ENCODE measurements at regions of chr22 and their contacts with region 1.

Region 1: GRCh38 chr22:36194971-36195370 is 6.6 kb downstream of the APOL4 start:
- DNase-seq: peak; percentile 60 to 76 (median 75)
- H3K4me3 ChIP-seq: no peak overlapping the region
- H3K27ac ChIP-seq: no peak overlapping the region
- H3K4me1 ChIP-seq: peaks cover 4 to 40% (median 20%) of the 10 kb centered on the region in 4 experiments
- H3K27me3 ChIP-seq: no peaks in the 10 kb centered on the region

Region 2: DNA sequence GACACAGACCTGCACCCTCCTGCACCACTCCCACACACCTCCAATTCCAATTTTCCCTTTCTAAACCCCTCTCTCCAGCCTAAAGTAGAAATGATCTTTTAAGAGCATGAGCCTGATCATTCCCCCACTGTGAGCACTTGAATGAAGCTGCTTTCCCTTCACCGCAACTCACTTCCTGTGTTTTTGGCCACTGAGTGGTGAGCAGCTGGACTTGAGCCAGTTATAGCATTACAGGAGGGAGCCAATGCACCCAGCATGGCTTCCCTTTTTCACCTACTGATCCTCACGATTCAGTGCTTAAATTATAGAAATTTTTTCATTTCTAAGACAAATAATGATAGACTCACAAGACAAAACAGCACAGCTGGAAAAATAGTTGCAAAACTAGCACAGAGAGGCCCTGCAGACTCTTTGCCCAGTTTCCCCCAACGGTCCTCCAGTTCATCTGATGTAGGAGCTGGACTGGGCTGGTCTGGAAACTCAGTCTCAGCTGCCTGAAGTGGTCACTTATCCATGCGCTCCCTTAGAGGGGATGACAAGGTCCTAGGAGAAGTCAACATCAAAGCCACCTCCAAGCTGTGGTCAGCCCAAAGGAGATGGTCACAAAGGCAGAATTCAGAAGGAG is 16.4 kb after region 1 on chr22:
- CTCF ChIA-PET with region 1: interaction called, 26 read pairs
- POLR2A ChIA-PET with region 1: no interaction called
- DNase-seq: peak; percentile 56 to 84 (median 81)
- H3K4me3 ChIP-seq: peak overlapping the region in 4 of 7 experiments; percentile 6 to 47 (median 35)
- H3K27ac ChIP-seq: no peak overlapping the region
- H3K4me1 ChIP-seq: peaks cover 6 to 52% (median 29%) of the 10 kb centered on the region in 4 experiments
- H3K27me3 ChIP-seq: no peaks in the 10 kb centered on the region

Region 3: DNA sequence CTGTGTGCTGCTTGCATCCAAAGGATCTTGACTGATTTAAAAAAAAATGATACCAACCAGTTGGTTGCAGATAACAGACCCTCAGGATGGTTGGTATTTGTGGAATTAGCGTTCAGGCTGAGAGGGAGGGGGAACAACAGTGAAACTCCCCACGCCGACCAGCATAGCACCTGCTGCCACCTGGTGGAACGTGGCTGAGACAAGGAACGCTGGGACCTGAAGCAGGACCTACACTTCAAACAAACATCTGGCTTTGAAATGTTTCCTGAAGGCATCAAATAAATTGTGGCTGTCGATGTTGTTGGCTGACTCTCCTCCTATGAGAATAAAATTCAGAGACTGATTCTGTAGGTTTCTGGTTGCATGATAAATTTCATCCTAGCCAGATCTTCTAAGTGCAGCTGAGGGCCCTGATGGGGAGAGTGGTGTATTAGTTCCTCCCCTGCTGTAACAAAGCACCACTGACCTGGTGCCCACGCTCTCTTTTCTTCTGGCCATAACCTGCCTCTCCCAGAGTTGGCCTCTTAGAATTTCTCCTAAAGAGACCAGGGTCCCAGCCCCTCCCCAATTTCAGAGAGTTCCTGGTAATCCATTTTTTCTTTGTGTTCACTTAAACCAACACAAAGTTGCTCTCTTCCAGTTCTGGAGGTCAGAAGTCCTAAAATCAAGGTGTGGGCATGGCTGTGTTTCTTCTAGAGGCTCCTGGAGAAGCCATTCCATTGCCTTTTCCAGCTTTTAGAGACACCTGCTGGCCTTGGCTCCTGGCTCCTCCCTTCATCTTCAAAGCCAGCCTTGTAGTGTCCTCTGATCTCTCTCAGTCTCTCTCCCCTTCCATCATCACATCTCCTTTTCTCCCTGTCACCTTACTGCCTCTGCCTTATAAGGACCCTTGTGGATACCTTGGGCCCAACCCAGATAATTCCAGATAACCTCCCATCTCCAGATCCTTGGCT is 27.1 kb after region 1 on chr22:
- CTCF ChIA-PET with region 1: interaction called, 26 read pairs
- POLR2A ChIA-PET with region 1: no interaction called
- DNase-seq: peak; percentile 52 to 59 (median 52)
- H3K4me3 ChIP-seq: peak overlapping the region in 1 of 7 experiments; percentile 61
- H3K27ac ChIP-seq: no peak overlapping the region
- H3K4me1 ChIP-seq: no peaks in the 10 kb centered on the region
- H3K27me3 ChIP-seq: no peaks in the 10 kb centered on the region

Region 4: GRCh38 chr22:36277482-36278291 is 82.7 kb after region 1 on chr22:
- CTCF ChIA-PET with region 1: interaction called, 11 read pairs
- POLR2A ChIA-PET with region 1: no interaction called
- DNase-seq: peak; percentile 62 to 81 (median 75)
- H3K4me3 ChIP-seq: peak overlapping the region in 1 of 7 experiments; percentile 8
- H3K27ac ChIP-seq: no peak overlapping the region
- H3K4me1 ChIP-seq: peaks cover 0 to 11% (median 6%) of the 10 kb centered on the region in 4 experiments
- H3K27me3 ChIP-seq: no peaks in the 10 kb centered on the region

Region 5: GRCh38 chr22:36286471-36287224 is 91.7 kb after region 1 on chr22:
- CTCF ChIA-PET with region 1: interaction called, 26 read pairs
- POLR2A ChIA-PET with region 1: no interaction called
- DNase-seq: peak; percentile 50 to 79 (median 69)
- H3K4me3 ChIP-seq: no peak overlapping the region
- H3K27ac ChIP-seq: no peak overlapping the region
- H3K4me1 ChIP-seq: peaks cover 0 to 3% (median under 1%) of the 10 kb centered on the region in 4 experiments
- H3K27me3 ChIP-seq: no peaks in the 10 kb centered on the region

Measured in common myeloid progenitor, CD34-positive (primary cell).